GM12878 (cell line): ENCODE measurements at regions of chr17 and their contacts with region 1.

Region 1: DNA sequence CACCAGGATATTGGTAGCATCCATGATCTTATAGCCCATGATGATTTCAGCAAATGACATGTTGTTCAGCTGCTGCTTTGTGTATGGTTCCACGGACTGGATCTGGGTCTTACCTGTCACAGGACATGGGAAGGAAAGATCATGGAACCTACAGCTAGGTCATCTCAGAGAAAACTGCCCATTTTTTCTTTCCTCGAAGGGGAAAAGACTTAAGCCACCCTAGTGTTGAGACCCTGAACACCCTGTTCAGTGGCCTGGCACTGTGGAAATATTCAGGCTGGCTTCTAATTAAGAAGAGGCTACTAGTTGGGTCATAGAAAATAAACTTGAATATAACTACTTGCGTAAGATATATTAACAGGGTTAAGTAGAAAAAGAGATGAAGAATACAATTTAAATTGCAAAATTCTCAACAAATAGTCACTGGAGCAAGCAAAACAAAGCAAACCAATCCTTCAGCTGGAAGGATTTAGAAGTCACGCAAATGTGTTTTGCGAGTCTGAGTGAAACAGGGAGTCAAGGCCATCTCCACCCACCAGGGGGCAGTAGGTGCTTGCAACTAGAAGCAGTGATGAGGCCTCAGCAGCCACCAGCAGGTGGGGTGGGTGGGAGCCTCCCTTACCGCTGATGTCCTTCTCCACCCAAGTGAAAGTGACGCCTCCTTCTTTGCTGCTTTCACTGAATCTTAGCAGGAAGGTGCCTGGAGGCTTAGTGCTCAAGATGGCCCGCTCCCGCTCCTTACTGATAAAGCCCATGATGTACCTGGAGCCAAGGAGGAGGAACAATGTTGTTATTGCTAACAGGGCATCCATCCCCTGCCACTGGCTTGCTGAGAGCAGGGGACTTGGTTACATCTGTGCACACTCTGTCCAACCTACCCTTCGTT is 34.3 kb downstream of the STAT5A start:
- DNase-seq: peak; percentile 61
- ATAC-seq: peak; percentile 99
- H3K4me3 ChIP-seq: no peak overlapping the region
- H3K27ac ChIP-seq: peak overlapping the region; percentile 40
- H3K4me1 ChIP-seq: peaks cover 18% of the 10 kb centered on the region
- H3K27me3 ChIP-seq: no peaks in the 10 kb centered on the region
- CTCF ChIP-seq: peak; percentile 99 to 100 (median 100); a peak in 5 of 6 replicates
- EP300 ChIP-seq: peak in 1 of 2 experiments; percentile 14; a peak in 1 of 4 replicates
- POLR2A ChIP-seq: peak; percentile 32; the same call in 1 of the 2 replicates
- RAD21 ChIP-seq: peak; percentile 99

Region 2: DNA sequence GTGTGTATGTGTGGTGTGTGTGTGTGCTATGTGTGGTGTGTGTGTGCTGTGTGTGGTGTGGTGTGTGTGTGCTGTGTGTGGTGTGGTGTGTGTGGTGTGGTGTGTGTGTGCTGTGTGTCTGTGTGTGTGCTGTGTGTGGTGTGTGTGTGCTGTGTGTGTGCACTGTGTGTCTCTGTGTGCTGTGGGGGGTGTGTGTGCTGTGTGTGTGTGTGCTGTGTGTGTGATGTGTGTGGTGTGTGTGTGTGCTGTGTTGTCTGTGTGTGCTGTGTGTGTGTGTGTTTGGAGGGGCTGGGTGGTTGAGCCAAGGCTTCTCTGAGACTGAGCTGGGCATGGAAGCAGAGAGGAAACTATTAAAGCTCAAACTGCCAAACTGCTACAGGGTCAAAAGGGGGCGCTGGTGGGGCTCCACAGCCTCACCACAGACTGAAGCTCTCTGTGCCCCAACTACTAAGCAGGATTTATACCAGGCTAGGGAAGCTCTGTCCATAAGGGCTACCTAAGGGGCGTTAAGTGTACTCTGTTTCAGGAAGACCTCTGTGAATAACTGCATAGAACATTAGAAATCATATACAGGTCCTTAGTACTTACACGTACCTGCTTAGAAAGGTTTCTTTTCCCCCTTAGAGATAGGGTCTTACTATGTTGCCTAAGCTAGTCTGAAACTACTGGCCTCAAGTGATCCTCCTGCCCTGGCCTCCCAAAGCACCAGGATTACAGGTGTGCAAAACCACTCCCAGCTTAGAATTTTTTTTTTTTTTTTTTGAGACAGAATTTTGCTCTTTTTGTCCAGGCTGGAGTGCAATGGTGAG is 100.5 kb before region 1 on chr17:
- CTCF ChIA-PET with region 1: interaction called, 16 read pairs
- POLR2A ChIA-PET with region 1: no interaction called
- RAD21 ChIA-PET with region 1: interaction called, 5 read pairs
- SMC1A ChIA-PET with region 1: interaction called, 13 read pairs
- in situ Hi-C with region 1: no loop called
- intact Hi-C with region 1: no loop called
- DNase-seq: no peak
- ATAC-seq: peak; percentile 87
- H3K4me3 ChIP-seq: no peak overlapping the region
- H3K27ac ChIP-seq: no peak overlapping the region
- H3K4me1 ChIP-seq: no peaks in the 10 kb centered on the region
- H3K27me3 ChIP-seq: no peaks in the 10 kb centered on the region
- CTCF ChIP-seq: peak; percentile 67 to 76 (median 70)
- EP300 ChIP-seq: no peak
- POLR2A ChIP-seq: no peak
- RAD21 ChIP-seq: peak; percentile 74

Region 3: GRCh38 chr17:42312285-42313130 is 10.1 kb before region 1 on chr17:
- CTCF ChIA-PET with region 1: interaction called, 34 read pairs
- POLR2A ChIA-PET with region 1: interaction called, 5 read pairs
- RAD21 ChIA-PET with region 1: interaction called, 9 read pairs
- SMC1A ChIA-PET with region 1: interaction called, 6 read pairs
- in situ Hi-C with region 1: no loop called
- intact Hi-C with region 1: no loop called
- DNase-seq: no peak
- ATAC-seq: peak; percentile 91
- H3K4me3 ChIP-seq: no peak overlapping the region
- H3K27ac ChIP-seq: peak overlapping the region; percentile 53
- H3K4me1 ChIP-seq: peaks cover 43% of the 10 kb centered on the region
- H3K27me3 ChIP-seq: no peaks in the 10 kb centered on the region
- CTCF ChIP-seq: peak; percentile 60 to 87 (median 71)
- EP300 ChIP-seq: no peak
- POLR2A ChIP-seq: peak; percentile 82
- RAD21 ChIP-seq: peak; percentile 67

Region 4: GRCh38 chr17:42337442-42337841 is 14.8 kb after region 1 on chr17:
- CTCF ChIA-PET with region 1: interaction called, 12 read pairs
- POLR2A ChIA-PET with region 1: interaction called, 3 read pairs
- RAD21 ChIA-PET with region 1: interaction called, 4 read pairs
- SMC1A ChIA-PET with region 1: interaction called, 6 read pairs
- in situ Hi-C with region 1: no loop called
- intact Hi-C with region 1: no loop called
- DNase-seq: peak; percentile 94
- ATAC-seq: peak; percentile 78
- H3K4me3 ChIP-seq: no peak overlapping the region
- H3K27ac ChIP-seq: peak overlapping the region; percentile 73
- H3K4me1 ChIP-seq: peaks cover 64% of the 10 kb centered on the region
- H3K27me3 ChIP-seq: no peaks in the 10 kb centered on the region
- CTCF ChIP-seq: no peak
- EP300 ChIP-seq: peak; percentile 70 to 85
- POLR2A ChIP-seq: 0 out of 2 replicates have a peak, but pooled peaks have one; percentile 17
- RAD21 ChIP-seq: no peak

Region 5: DNA sequence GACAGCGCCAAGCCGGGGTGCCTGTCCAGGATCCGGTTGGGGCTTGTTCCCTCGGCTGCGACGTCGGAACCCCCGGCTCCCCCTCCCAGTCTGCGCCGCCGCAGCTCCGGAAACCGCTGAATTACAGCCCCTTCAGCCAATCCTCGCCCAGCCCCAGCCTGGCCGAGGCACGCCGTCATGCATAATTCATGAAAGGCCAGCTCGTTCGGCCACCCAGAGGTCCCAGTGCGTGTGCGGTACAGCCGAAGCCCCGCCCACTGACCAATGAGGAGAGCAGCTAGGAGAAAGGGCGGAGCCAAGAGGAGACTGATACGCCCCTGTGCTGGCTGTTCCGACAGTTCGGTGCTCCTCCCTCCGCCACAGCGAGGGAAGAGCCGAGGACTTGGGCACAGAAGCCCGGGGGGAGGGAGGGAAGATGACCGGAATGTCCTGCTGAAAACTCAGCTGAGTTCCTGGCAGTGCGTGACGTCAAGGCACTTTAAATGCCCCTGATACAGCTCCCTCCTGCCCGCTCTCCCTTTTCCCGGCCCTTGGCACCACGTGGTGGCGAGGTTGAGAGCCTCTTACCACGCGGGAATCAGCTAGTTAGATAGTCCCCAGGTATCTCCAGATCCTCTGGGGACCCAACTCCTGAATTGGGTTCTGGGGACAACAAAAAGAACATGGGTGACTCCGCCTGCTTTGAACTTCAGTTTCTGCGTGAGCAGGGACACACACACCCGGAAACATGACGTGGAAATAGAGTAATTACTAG is 65.9 kb after region 1 on chr17 and contains the start of gene STAT3:
- CTCF ChIA-PET with region 1: interaction called, 52 read pairs
- POLR2A ChIA-PET with region 1: interaction called, 6 read pairs
- RAD21 ChIA-PET with region 1: interaction called, 6 read pairs
- SMC1A ChIA-PET with region 1: interaction called, 528 read pairs
- in situ Hi-C with region 1: no loop called
- intact Hi-C with region 1: loop called (anchors 5 kb)
- DNase-seq: peak; percentile 100
- ATAC-seq: peak; percentile 95
- H3K4me3 ChIP-seq: peak within 1 kb of the TSS; percentile 91
- H3K27ac ChIP-seq: peak within 1 kb of the TSS; percentile 97
- H3K4me1 ChIP-seq: peaks cover 17% of the 10 kb centered on the region
- H3K27me3 ChIP-seq: no peaks in the 10 kb centered on the region
- CTCF ChIP-seq: 0 out of 6 replicates have a peak, but pooled peaks of 1 of the 3 experiments have one; percentile 3
- EP300 ChIP-seq: peak; percentile 89 to 100
- POLR2A ChIP-seq: peak; percentile 92
- RAD21 ChIP-seq: peak; percentile 21; the same call in 1 of the 2 replicates
- polyA plus RNA-seq, gene STAT3: 18.4 to 18.9 TPM

Region 6: DNA sequence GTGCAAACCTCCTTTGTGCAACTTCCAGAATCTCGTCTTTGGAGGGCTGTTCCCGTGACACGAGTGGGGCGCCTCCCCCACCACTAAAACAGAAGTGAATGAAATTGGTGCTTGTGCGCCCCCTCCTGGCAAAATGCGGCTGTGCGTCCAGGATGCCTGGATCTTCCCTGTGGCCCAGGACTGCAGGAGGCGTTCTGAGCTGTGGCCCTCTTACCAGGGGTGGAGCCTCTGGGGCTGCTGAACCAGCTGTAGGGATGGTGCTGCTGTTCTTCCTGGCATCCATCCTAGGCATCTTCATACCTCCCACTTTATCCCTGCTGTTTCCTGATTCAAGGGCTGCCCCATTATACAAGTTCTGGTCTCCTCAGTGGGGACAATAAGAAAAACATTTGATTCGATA is 194.9 kb after region 1 on chr17:
- CTCF ChIA-PET with region 1: interaction called, 3 read pairs
- POLR2A ChIA-PET with region 1: interaction called, 4 read pairs
- RAD21 ChIA-PET with region 1: no interaction called
- SMC1A ChIA-PET with region 1: interaction called, 3 read pairs
- in situ Hi-C with region 1: no loop called
- intact Hi-C with region 1: loop called (anchors 2 kb)
- DNase-seq: no peak
- ATAC-seq: peak; percentile 85
- H3K4me3 ChIP-seq: no peak overlapping the region
- H3K27ac ChIP-seq: no peak overlapping the region
- H3K4me1 ChIP-seq: peaks cover 4% of the 10 kb centered on the region
- H3K27me3 ChIP-seq: no peaks in the 10 kb centered on the region
- CTCF ChIP-seq: peak; percentile 93 to 98 (median 98); a peak in 5 of 6 replicates
- EP300 ChIP-seq: no peak
- POLR2A ChIP-seq: no peak
- RAD21 ChIP-seq: peak; percentile 85

Region 7: GRCh38 chr17:42527273-42527703 is 204.7 kb after region 1 on chr17:
- CTCF ChIA-PET with region 1: interaction called, 11 read pairs
- POLR2A ChIA-PET with region 1: no interaction called
- RAD21 ChIA-PET with region 1: interaction called, 3 read pairs
- SMC1A ChIA-PET with region 1: interaction called, 5 read pairs
- in situ Hi-C with region 1: loop called (anchors 5 kb)
- intact Hi-C with region 1: loop called (anchors 2 kb)
- DNase-seq: peak; percentile 51
- ATAC-seq: peak; percentile 91
- H3K4me3 ChIP-seq: no peak overlapping the region
- H3K27ac ChIP-seq: no peak overlapping the region
- H3K4me1 ChIP-seq: peaks cover 22% of the 10 kb centered on the region
- H3K27me3 ChIP-seq: no peaks in the 10 kb centered on the region
- CTCF ChIP-seq: peak; percentile 86 to 93 (median 89); a peak in 5 of 6 replicates
- EP300 ChIP-seq: no peak
- POLR2A ChIP-seq: no peak
- RAD21 ChIP-seq: peak; percentile 96